Heart left ventricle (tissue), 16 donors: ENCODE measurements at regions of chr14 and their contacts with region 1.

Region 1: GRCh38 chr14:51651388-51652167 is at the start of gene FRMD6:
- DNase-seq: peak; percentile 90 to 94 (median 93)
- ATAC-seq: peak; percentile 88 to 95 (median 92)
- H3K4me3 ChIP-seq: peak within 1 kb of the TSS; percentile 60 to 96 (median 88)
- H3K27ac ChIP-seq: peak within 1 kb of the TSS; percentile 89 to 100 (median 97)
- H3K4me1 ChIP-seq: peaks cover 0 to 36% (median 12%) of the 10 kb centered on the region in 12 donors
- H3K27me3 ChIP-seq: peaks cover 0 to 6% (median 0%) of the 10 kb centered on the region in 9 donors
- CTCF ChIP-seq: peak; percentile 63 to 90 (median 76)
- POLR2A ChIP-seq: peak in 1 of 2 donors; percentile 85
- total RNA-seq, gene FRMD6: 4.0 to 23.2 (median 9.2) TPM

Region 2: DNA sequence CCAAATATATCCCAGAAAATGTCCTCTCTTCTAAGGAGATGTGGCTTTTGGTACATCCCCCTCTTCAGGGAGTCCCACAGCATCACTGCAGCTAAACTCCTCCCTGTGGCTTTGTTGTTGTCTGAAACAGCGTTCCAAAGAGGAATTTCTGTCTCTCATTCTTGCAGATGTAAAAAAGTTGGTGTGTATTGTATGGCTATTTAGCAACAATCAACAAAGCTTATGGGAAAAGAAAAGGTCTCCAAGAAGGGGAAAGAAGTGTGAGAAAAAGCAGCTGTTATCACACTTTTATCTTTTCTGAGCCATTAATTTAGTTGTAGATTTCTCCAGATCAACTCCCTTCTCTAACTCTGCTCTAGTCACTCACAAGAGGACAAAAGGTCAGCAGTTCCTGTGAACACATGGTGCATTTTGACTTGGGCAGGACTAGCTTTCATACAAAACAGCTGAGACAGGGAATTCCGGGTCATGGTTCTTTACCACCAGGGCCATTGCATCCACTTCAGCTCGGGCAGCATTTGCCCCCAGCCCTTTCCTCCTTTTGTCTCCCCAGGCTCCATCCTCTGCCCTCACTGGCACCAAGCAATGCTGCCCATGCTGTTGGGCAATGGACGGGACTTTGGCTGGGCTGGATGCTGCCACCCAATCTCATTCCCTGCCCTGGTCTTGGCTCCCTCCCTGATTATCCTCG is 226.9 kb before region 1 on chr14:
- intact Hi-C with region 1: loop called in 1 of 10 experiments (anchors 10 kb)
- DNase-seq: peak in 3 of 5 donors; percentile 52 to 59 (median 55)
- ATAC-seq: peak; percentile 74 to 91 (median 82)
- H3K4me3 ChIP-seq: peak overlapping the region in 1 of 12 donors; percentile 0
- H3K27ac ChIP-seq: peak overlapping the region; percentile 35 to 80 (median 72)
- H3K4me1 ChIP-seq: peaks cover 0 to 21% (median 9%) of the 10 kb centered on the region in 12 donors
- H3K27me3 ChIP-seq: no peaks in the 10 kb centered on the region
- CTCF ChIP-seq: peak in 1 of 12 donors; percentile 16
- POLR2A ChIP-seq: no peak

Region 3: GRCh38 chr14:51704545-51704944 is 53.0 kb after region 1 on chr14:
- intact Hi-C with region 1: loop called in 1 of 10 experiments (anchors 10 kb)
- DNase-seq: no peak
- ATAC-seq: no peak
- H3K4me3 ChIP-seq: no peak overlapping the region
- H3K27ac ChIP-seq: no peak overlapping the region
- H3K4me1 ChIP-seq: peaks cover 0 to 5% (median 0%) of the 10 kb centered on the region in 12 donors
- H3K27me3 ChIP-seq: no peaks in the 10 kb centered on the region
- CTCF ChIP-seq: no peak
- POLR2A ChIP-seq: no peak

Region 4: DNA sequence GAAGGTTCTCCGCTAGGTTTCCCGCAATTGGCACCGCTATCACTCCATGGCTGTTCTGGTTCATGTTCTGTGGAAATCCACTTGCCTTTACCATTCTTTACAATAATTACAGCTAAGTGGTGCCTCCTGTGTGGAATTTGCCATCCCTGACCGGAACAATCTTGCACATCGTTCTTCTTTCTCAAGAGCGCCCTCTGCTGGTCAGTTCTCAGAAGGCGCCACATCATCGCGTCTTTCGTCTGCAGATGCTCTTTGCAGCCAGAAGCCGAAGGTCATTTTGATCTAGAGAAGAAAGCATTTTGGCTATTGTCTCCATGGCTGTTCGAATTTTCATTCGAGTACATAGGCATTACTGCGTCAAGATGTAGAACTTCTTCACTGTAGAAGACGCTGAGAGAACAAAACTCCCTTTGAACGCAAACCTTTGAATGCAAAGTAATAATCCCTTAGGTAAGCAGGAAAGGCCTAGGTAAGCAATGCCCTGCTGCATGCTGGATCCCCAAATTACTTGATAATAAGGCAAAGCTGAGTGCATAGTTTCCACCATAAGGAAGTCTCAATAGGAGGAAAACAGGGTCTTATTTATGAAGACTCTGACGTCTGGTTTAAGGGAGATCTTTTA is 327.6 kb after region 1 on chr14:
- intact Hi-C with region 1: loop called in 1 of 10 experiments (anchors 5 kb)
- DNase-seq: peak; percentile 74 to 86 (median 82)
- ATAC-seq: peak; percentile 60 to 83 (median 80)
- H3K4me3 ChIP-seq: no peak overlapping the region
- H3K27ac ChIP-seq: peak overlapping the region in 6 of 12 donors; percentile 5 to 46 (median 22)
- H3K4me1 ChIP-seq: peaks cover 0 to 15% (median 0%) of the 10 kb centered on the region in 12 donors
- H3K27me3 ChIP-seq: no peaks in the 10 kb centered on the region
- CTCF ChIP-seq: peak; percentile 85 to 98 (median 94)
- POLR2A ChIP-seq: no peak